ENCODE measurements at regions of chr7 and their contacts with region 1.

Region 1: DNA sequence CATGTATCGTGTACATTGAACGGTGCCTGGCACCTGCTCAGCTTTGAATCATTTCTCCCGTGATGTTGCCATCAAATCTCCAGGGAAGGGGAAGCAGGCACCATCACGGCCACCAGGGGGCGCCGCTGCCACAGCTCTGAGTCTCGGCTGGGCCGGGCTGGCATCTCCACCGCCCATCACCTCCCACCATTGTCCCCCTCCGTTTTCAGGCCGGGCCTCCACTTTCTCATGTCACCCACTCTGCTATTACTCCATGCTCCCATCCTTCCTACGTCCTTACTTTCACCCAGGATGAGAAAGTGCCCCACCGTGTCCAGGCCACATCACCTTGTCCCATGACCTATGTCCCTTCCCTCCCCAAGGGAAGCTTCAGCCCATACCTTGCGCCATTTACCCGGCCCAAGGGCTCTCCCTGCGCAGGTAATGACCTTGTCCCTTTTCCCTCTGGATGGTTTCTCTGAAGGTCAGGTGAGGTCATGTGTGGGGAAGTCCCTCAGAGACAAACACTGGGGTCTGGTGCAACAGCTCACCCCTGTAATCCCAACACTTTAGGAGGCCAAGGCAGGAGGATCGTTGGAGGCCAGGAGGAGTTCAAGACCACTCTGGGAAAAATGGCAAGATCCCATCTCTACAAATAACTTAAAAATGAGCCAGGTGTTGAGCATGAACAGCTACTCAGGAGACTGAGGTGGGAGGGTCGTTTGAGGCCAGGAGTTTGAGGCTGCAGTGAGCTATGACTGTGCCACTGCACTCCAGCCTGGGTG is 31.8 kb upstream of the OCM2 start:
- DNase-seq: peak; percentile 76 to 78
- H3K4me3 ChIP-seq: no peak overlapping the region
- H3K27ac ChIP-seq: no peak overlapping the region
- H3K4me1 ChIP-seq: no peaks in the 10 kb centered on the region
- H3K27me3 ChIP-seq: no peaks in the 10 kb centered on the region
- CTCF ChIP-seq: peak; percentile 62 to 94 (median 80)
- POLR2A ChIP-seq: no peak

Region 2: GRCh38 chr7:98168181-98168905 is 146.6 kb after region 1 on chr7:
- intact Hi-C with region 1: loop called (anchors 2 kb)
- DNase-seq: peak; percentile 70 to 77
- H3K4me3 ChIP-seq: no peak overlapping the region
- H3K27ac ChIP-seq: no peak overlapping the region
- H3K4me1 ChIP-seq: no peaks in the 10 kb centered on the region
- H3K27me3 ChIP-seq: no peaks in the 10 kb centered on the region
- CTCF ChIP-seq: peak; percentile 65 to 86 (median 80)
- POLR2A ChIP-seq: no peak

Region 3: GRCh38 chr7:98240961-98241674 is 219.3 kb after region 1 on chr7:
- intact Hi-C with region 1: loop called (anchors 10 kb)
- DNase-seq: peak; percentile 31 to 35
- H3K4me3 ChIP-seq: no peak overlapping the region
- H3K27ac ChIP-seq: no peak overlapping the region
- H3K4me1 ChIP-seq: no peaks in the 10 kb centered on the region
- H3K27me3 ChIP-seq: no peaks in the 10 kb centered on the region
- CTCF ChIP-seq: peak; percentile 29 to 68 (median 43)
- POLR2A ChIP-seq: no peak

Region 4: GRCh38 chr7:98341106-98341505 is 319.3 kb after region 1 on chr7:
- intact Hi-C with region 1: no loop called
- DNase-seq: no peak
- H3K4me3 ChIP-seq: no peak overlapping the region
- H3K27ac ChIP-seq: no peak overlapping the region
- H3K4me1 ChIP-seq: no peaks in the 10 kb centered on the region
- H3K27me3 ChIP-seq: no peaks in the 10 kb centered on the region
- CTCF ChIP-seq: no peak
- POLR2A ChIP-seq: no peak

Measured in thyroid gland (tissue), 4 donors.